ENCODE measurements at regions of chr6 and their contacts with region 1.

Region 1: GRCh38 chr6:14066782-14067406 is 50.7 kb upstream of the CD83 start:
- DNase-seq: no peak
- ATAC-seq: peak; percentile 88
- H3K4me3 Mint-ChIP-seq: peak overlapping the region; percentile 42
- H3K27ac Mint-ChIP-seq: peak overlapping the region; percentile 74
- H3K4me1 Mint-ChIP-seq: peaks cover 37% of the 10 kb centered on the region
- H3K27me3 Mint-ChIP-seq: no peaks in the 10 kb centered on the region
- CTCF ChIP-seq: no peak

Region 2: DNA sequence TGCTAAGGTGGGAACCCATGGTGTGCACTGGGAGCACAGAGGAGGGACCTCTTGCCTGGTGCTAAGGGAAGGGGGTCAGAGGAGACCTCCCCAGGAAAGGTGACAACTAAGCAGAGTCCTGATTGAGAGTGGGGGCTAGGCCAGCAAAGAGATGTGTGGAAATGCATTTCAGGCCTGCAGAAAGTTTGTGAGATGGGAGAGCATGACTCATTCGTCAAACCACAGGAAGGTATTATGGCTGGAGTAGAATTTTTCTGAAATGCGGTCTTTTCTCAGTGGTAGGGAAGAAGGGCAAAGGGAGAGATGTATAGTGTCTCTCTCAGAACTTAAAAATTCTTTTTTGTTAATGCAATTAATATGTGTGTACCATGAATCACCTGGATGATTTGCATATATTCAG is 1800.3 kb before region 1 on chr6:
- CTCF ChIA-PET with region 1: no interaction called
- POLR2A ChIA-PET with region 1: no interaction called
- intact Hi-C with region 1: no loop called
- DNase-seq: no peak
- ATAC-seq: no peak
- H3K4me3 Mint-ChIP-seq: no peak overlapping the region
- H3K27ac Mint-ChIP-seq: no peak overlapping the region
- H3K4me1 Mint-ChIP-seq: no peaks in the 10 kb centered on the region
- H3K27me3 Mint-ChIP-seq: peaks cover 6% of the 10 kb centered on the region
- CTCF ChIP-seq: no peak

Region 3: DNA sequence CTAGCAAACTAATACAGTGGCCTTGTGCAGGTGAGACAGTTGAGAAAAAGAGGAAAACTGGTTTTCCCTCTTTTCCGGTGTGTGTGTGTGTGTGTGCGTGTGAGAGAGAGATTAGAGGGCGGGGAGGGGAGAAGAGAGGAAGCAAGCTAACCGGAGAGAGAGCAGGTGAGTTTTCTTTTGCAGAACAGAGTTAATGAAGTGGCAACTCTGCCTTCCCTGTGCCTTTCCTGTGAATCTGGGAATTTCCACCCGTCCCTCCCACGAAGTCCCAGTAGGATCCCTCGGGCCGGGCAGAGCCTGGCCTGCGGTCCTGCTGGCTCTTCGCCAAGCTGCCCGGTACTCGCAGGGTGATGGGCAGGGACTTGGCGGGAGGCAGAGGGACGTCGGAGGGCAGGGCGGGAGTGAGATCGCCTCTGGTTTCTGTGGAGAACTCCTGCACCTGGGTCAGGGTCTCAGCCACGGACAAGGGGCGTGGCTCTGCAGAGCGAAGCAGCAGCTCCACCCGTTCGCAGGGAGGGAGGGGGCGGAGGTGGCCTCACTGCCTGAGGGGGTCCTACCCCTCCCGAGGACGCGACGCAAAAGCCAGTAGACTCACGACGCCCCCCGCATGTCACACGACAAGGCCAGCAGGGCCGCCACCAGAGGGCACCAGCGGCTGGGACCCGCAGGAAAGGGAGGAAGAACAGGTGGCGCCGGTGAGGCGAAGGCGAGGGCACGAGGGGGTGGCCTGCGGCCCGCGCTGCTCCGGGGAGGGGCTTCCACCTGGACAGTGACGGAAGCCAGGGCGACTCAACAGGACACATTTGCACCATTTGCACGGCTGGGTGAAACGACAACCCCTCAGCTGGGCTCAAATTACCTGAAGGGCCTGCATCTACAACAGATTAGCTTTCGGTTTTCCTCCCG is 193.4 kb before region 1 on chr6:
- CTCF ChIA-PET with region 1: interaction called, 19 read pairs
- POLR2A ChIA-PET with region 1: no interaction called
- intact Hi-C with region 1: loop called (anchors 1 kb)
- DNase-seq: peak; percentile 74
- ATAC-seq: peak; percentile 87
- H3K4me3 Mint-ChIP-seq: peak overlapping the region; percentile 77
- H3K27ac Mint-ChIP-seq: no peak overlapping the region
- H3K4me1 Mint-ChIP-seq: peaks cover 20% of the 10 kb centered on the region
- H3K27me3 Mint-ChIP-seq: peaks cover 2% of the 10 kb centered on the region
- CTCF ChIP-seq: peak; percentile 80

Region 4: DNA sequence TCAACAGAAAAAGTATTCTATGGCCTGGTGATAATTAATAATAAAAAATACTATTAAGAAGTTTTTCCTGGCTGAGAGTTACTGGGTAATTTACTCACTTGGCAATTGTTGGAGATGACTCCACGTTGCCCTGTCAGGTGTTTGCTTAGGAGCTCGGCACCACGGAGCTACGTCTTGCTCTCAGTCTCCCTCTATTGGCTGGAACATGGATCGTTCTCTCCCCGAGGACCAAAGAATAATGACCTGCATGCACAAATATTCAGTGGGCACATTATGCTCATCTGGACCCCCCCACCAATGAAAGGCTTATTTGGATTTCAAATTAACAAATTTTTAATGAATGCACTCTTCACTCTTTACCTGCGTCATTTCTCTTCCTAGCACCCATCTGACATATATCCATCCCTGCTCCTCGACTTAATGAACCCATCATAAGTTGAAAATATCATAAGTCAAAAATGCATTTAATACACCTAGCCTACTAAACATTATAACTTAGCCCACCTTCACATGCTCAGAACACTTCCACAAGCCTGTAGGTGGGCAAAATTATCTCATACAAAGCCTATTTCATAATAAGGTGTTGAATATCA is 20.3 kb before region 1 on chr6:
- CTCF ChIA-PET with region 1: interaction called, 42 read pairs
- POLR2A ChIA-PET with region 1: no interaction called
- intact Hi-C with region 1: loop called (anchors 2 kb)
- DNase-seq: no peak
- ATAC-seq: peak; percentile 89
- H3K4me3 Mint-ChIP-seq: no peak overlapping the region
- H3K27ac Mint-ChIP-seq: no peak overlapping the region
- H3K4me1 Mint-ChIP-seq: peaks cover 5% of the 10 kb centered on the region
- H3K27me3 Mint-ChIP-seq: peaks cover 3% of the 10 kb centered on the region
- CTCF ChIP-seq: peak; percentile 20

Region 5: GRCh38 chr6:14108571-14109410 is 41.9 kb after region 1 on chr6:
- CTCF ChIA-PET with region 1: interaction called, 40 read pairs
- POLR2A ChIA-PET with region 1: interaction called, 190 read pairs
- intact Hi-C with region 1: no loop called
- DNase-seq: peak; percentile 69
- ATAC-seq: peak; percentile 71
- H3K4me3 Mint-ChIP-seq: peak overlapping the region; percentile 79
- H3K27ac Mint-ChIP-seq: peak overlapping the region; percentile 97
- H3K4me1 Mint-ChIP-seq: peaks cover 67% of the 10 kb centered on the region
- H3K27me3 Mint-ChIP-seq: no peaks in the 10 kb centered on the region
- CTCF ChIP-seq: no peak

Region 6: DNA sequence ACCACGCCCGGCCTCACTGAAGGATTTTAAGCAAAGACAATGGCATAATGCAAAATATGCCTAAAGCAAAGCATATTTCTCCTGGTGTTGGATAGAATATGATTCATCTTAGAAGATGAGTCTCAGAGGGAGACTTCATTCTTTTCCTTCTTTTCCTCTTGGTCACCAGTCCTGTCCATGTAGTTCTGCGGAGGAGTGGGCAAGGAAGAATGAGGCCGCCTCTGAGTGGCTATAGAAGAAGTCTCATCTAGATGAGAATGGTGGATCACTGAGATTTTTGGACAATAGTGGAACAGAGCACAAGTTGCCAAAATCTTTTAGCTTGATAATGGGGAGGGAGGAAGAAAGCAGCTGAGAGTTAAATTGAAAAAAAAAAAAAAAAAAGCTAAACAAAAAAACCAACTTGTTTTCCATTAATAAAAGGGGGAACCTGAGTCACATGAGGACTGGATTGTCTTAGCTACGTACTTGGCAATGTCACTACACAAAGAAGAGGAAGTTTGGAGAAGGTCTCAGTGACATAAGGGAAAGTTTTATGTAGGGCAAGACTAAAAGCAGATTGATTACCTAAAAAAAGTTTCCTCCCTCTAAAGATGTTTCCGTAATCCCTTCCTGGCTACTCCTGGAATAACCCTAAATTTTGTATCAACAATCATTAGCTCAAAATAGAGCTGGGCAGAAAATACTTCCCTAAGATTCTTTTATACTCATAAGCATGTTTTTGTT is 56.7 kb after region 1 on chr6:
- CTCF ChIA-PET with region 1: interaction called, 40 read pairs
- POLR2A ChIA-PET with region 1: interaction called, 183 read pairs
- intact Hi-C with region 1: no loop called
- DNase-seq: no peak
- ATAC-seq: no peak
- H3K4me3 Mint-ChIP-seq: peak overlapping the region; percentile 95
- H3K27ac Mint-ChIP-seq: peak overlapping the region; percentile 94
- H3K4me1 Mint-ChIP-seq: peaks cover 84% of the 10 kb centered on the region
- H3K27me3 Mint-ChIP-seq: no peaks in the 10 kb centered on the region
- CTCF ChIP-seq: no peak

Region 7: GRCh38 chr6:14144678-14145113 is 77.8 kb after region 1 on chr6:
- CTCF ChIA-PET with region 1: interaction called, 45 read pairs
- POLR2A ChIA-PET with region 1: interaction called, 9 read pairs
- intact Hi-C with region 1: loop called (anchors 1 kb)
- DNase-seq: peak; percentile 63
- ATAC-seq: peak; percentile 84
- H3K4me3 Mint-ChIP-seq: peak overlapping the region; percentile 20
- H3K27ac Mint-ChIP-seq: peak overlapping the region; percentile 62
- H3K4me1 Mint-ChIP-seq: peaks cover 42% of the 10 kb centered on the region
- H3K27me3 Mint-ChIP-seq: no peaks in the 10 kb centered on the region
- CTCF ChIP-seq: peak; percentile 57

Region 8: DNA sequence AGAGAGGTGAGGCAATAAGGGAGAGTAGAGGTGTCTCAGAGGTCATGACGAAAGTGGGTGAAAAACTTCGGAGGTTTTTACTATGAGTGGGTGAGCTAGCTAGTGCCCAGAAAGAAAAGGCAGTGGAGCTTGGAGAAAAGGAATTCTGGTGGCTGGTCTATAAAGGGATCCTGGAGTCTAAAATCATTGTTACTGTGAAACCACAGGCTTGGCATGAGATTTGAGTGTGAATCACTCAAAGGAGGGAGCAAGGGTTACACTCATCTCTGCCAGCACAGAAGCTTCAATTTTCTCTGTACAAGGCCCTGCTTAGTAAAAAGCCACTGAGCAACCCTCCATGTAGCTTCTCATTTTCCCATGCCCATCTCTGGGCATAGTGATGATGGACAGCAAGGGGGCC is 98.2 kb after region 1 on chr6:
- CTCF ChIA-PET with region 1: no interaction called
- POLR2A ChIA-PET with region 1: no interaction called
- intact Hi-C with region 1: no loop called
- DNase-seq: no peak
- ATAC-seq: no peak
- H3K4me3 Mint-ChIP-seq: no peak overlapping the region
- H3K27ac Mint-ChIP-seq: no peak overlapping the region
- H3K4me1 Mint-ChIP-seq: no peaks in the 10 kb centered on the region
- H3K27me3 Mint-ChIP-seq: no peaks in the 10 kb centered on the region
- CTCF ChIP-seq: no peak

Region 9: GRCh38 chr6:14254505-14254904 is 187.6 kb after region 1 on chr6:
- CTCF ChIA-PET with region 1: no interaction called
- POLR2A ChIA-PET with region 1: no interaction called
- intact Hi-C with region 1: no loop called
- DNase-seq: no peak
- ATAC-seq: peak; percentile 87
- H3K4me3 Mint-ChIP-seq: peak overlapping the region; percentile 58
- H3K27ac Mint-ChIP-seq: peak overlapping the region; percentile 75
- H3K4me1 Mint-ChIP-seq: peaks cover 46% of the 10 kb centered on the region
- H3K27me3 Mint-ChIP-seq: no peaks in the 10 kb centered on the region
- CTCF ChIP-seq: no peak

Measured in activated B cell treated with CpG ODN at 0.5 μM for 24 hours (primary cell).